Colonic mucosa (tissue), 4 donors: ENCODE measurements at regions of chr4 and their contacts with region 1.

Region 1: DNA sequence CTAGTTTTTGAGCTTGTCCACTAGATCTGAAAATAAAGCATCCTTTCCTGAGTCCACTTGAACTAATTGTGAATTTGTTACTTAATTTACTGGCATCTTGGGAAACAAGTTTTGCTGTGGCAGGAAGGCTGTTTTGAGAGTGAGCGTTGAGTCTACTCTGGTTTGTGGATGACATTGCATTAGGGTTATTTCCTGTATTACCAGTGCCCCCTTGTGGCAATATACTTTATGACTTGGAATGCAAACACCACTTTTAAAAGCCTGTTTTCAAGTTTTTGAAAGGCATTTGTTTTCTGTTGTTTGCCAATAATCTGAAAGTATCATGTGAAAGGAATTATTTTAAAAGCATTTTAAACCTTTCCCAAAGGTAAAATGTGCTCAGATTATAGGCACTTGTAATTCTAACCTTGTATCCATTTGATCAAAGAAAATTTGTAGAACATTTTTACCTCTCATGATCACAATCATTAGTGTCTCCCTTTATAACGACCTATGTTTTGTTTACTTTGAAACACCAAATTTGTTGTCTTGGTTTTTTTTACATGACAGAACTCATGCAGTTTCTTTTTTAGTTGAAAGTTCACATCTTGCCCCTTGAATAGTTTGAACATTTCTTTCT is 18.0 kb upstream of the CYP2U1 start:
- DNase-seq: peak; percentile 58
- H3K4me3 ChIP-seq: no peak overlapping the region
- H3K27ac ChIP-seq: no peak overlapping the region
- H3K4me1 ChIP-seq: no peaks in the 10 kb centered on the region
- H3K27me3 ChIP-seq: no peaks in the 10 kb centered on the region
- CTCF ChIP-seq: peak; percentile 80

Region 2: DNA sequence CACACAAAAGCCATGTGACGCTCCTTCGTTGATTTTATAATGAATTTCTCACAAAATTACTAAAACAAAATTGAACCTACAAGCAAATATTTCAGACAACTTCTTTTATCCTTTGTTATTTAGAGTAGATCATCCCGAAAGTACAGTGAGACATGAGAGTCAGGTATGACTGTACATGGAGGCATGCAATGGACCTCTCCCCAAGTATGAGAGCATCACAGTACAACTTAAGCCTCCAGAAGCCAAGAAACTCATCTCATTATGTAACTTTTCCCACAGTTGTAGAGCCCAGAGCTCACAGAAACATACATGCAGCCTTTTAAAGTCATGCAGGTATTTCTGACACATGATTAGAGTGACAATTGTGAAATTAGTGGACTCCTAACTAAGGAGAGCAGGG is 361.1 kb before region 1 on chr4:
- intact Hi-C with region 1: loop called (anchors 10 kb)
- DNase-seq: no peak
- H3K4me3 ChIP-seq: no peak overlapping the region
- H3K27ac ChIP-seq: no peak overlapping the region
- H3K4me1 ChIP-seq: no peaks in the 10 kb centered on the region
- H3K27me3 ChIP-seq: no peaks in the 10 kb centered on the region
- CTCF ChIP-seq: no peak

Region 3: DNA sequence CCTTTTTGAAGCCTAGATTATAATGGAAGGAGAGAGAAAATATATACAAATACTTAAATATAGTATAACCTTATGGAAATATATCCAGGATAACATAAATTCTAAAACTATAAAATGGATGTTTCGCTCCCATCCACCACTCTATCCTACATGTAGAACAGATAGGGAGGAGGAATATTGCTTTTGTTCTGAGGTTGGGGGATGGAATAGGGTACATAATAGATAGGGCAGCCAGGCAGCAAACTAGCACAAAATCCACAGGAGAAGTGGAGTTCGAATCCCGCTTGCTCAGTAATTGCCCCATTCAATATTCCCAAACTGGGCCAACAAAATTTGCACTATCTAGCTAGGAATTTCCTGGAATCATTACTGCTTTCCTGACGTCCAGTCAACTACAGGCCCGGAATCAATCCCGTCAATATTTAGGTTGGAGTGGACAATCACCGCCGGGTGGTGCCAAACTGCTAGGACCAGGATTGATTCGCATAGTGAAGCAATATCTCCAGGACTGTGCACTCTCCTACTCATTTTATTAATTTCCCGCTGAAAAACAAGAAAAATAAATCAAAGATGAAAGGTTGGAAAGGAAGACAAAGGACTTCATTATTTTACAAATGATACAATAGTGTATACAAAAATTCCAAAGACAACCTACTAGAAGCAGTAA is 153.0 kb before region 1 on chr4:
- intact Hi-C with region 1: loop called (anchors 2 kb)
- DNase-seq: peak; percentile 53
- H3K4me3 ChIP-seq: no peak overlapping the region
- H3K27ac ChIP-seq: no peak overlapping the region
- H3K4me1 ChIP-seq: no peaks in the 10 kb centered on the region
- H3K27me3 ChIP-seq: no peaks in the 10 kb centered on the region
- CTCF ChIP-seq: peak; percentile 37

Region 4: GRCh38 chr4:107824353-107825071 is 88.9 kb before region 1 on chr4 and contains the start of gene SGMS2:
- intact Hi-C with region 1: loop called (anchors 10 kb)
- DNase-seq: peak; percentile 91
- H3K4me3 ChIP-seq: peak within 1 kb of the TSS; percentile 73
- H3K27ac ChIP-seq: peak within 1 kb of the TSS; percentile 96
- H3K4me1 ChIP-seq: no peaks in the 10 kb centered on the region
- H3K27me3 ChIP-seq: no peaks in the 10 kb centered on the region
- CTCF ChIP-seq: no peak
- total RNA-seq, gene SGMS2: 34.9 to 49.1 TPM